ENCODE measurements at regions of chr13 and their contacts with region 1.

Region 1: GRCh38 chr13:52348983-52349780 is 56.8 kb downstream of the THSD1 start:
- DNase-seq: no peak
- H3K4me3 ChIP-seq: no peak overlapping the region
- H3K27ac ChIP-seq: no peak overlapping the region
- H3K4me1 ChIP-seq: no peaks in the 10 kb centered on the region
- H3K27me3 ChIP-seq: no peaks in the 10 kb centered on the region
- CTCF ChIP-seq: no peak
- POLR2A ChIP-seq: no peak

Region 2: GRCh38 chr13:52141297-52141696 is 207.9 kb before region 1 on chr13:
- intact Hi-C with region 1: no loop called
- DNase-seq: no peak
- H3K4me3 ChIP-seq: no peak overlapping the region
- H3K27ac ChIP-seq: no peak overlapping the region
- H3K4me1 ChIP-seq: no peaks in the 10 kb centered on the region
- H3K27me3 ChIP-seq: no peaks in the 10 kb centered on the region
- CTCF ChIP-seq: no peak
- POLR2A ChIP-seq: no peak

Region 3: GRCh38 chr13:52432456-52432855 is 83.3 kb after region 1 on chr13:
- intact Hi-C with region 1: no loop called
- DNase-seq: no peak
- H3K4me3 ChIP-seq: no peak overlapping the region
- H3K27ac ChIP-seq: no peak overlapping the region
- H3K4me1 ChIP-seq: peaks cover 3% of the 10 kb centered on the region
- H3K27me3 ChIP-seq: no peaks in the 10 kb centered on the region
- CTCF ChIP-seq: no peak
- POLR2A ChIP-seq: no peak

Region 4: GRCh38 chr13:52450012-52450792 is 101.0 kb after region 1 on chr13 and contains the start of gene VPS36:
- intact Hi-C with region 1: loop called (anchors 10 kb)
- DNase-seq: peak; percentile 97
- H3K4me3 ChIP-seq: peak within 1 kb of the TSS; percentile 79 to 93
- H3K27ac ChIP-seq: peak within 1 kb of the TSS; percentile 69 to 96
- H3K4me1 ChIP-seq: peaks cover 5% of the 10 kb centered on the region
- H3K27me3 ChIP-seq: no peaks in the 10 kb centered on the region
- CTCF ChIP-seq: peak; percentile 99 to 100 (median 99)
- POLR2A ChIP-seq: peak; percentile 15
- total RNA-seq, gene VPS36: 24.6 to 25.6 TPM

Region 5: GRCh38 chr13:52599848-52600603 is 250.8 kb after region 1 on chr13:
- intact Hi-C with region 1: no loop called
- DNase-seq: peak; percentile 53
- H3K4me3 ChIP-seq: peak overlapping the region; percentile 73 to 75
- H3K27ac ChIP-seq: peak overlapping the region; percentile 86 to 91
- H3K4me1 ChIP-seq: peaks cover 11% of the 10 kb centered on the region
- H3K27me3 ChIP-seq: no peaks in the 10 kb centered on the region
- CTCF ChIP-seq: no peak
- POLR2A ChIP-seq: no peak

Region 6: GRCh38 chr13:52804202-52804641 is 455.0 kb after region 1 on chr13:
- intact Hi-C with region 1: no loop called
- DNase-seq: no peak
- H3K4me3 ChIP-seq: no peak overlapping the region
- H3K27ac ChIP-seq: no peak overlapping the region
- H3K4me1 ChIP-seq: no peaks in the 10 kb centered on the region
- H3K27me3 ChIP-seq: no peaks in the 10 kb centered on the region
- CTCF ChIP-seq: no peak
- POLR2A ChIP-seq: no peak